GM12878 (cell line): ENCODE measurements at regions of chr3 and their contacts with region 1.

Region 1: DNA sequence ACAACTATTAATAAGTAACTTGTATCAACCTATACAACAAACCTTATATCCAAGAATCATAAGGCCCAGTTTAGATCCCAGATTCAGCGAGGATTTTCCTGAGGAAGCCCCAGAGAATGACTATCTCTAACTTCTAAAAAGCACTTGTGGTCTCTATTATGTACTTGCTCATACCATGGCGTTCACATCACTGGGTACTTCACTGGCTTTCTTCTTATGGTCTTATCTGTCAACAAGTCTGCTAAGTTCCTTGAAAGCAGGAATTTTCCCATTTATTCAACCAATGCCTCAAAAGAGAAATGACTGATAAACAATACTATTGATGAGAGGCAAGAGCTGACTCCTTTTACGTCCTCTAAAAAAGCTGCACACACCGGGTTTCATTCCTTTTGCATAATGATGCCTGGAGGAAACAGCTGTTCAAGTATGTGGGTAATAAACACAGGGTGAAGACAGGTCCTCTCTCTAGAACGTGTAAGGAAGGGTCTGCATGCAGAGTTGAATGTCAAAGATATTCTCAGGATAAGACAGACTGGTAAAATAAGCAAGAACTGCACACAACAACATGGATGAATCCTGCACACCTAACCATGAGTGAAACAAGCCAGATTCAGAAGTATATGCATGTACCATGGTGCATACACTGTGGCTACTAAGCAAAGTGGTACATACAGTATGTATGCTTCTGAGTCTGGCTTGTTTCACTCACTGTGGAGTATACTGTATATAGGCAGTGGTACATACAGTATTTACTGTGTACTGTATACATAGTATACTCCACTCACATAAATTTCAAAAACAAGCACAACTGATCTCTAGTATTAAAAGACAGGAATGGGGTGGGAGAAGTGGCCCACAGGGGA is 408.7 kb downstream of the SHQ1 start:
- DNase-seq: no peak
- ATAC-seq: peak; percentile 49
- H3K4me3 ChIP-seq: no peak overlapping the region
- H3K27ac ChIP-seq: no peak overlapping the region
- H3K4me1 ChIP-seq: peaks cover 26% of the 10 kb centered on the region
- H3K27me3 ChIP-seq: no peaks in the 10 kb centered on the region
- CTCF ChIP-seq: no peak
- EP300 ChIP-seq: no peak
- POLR2A ChIP-seq: no peak
- RAD21 ChIP-seq: no peak

Region 2: DNA sequence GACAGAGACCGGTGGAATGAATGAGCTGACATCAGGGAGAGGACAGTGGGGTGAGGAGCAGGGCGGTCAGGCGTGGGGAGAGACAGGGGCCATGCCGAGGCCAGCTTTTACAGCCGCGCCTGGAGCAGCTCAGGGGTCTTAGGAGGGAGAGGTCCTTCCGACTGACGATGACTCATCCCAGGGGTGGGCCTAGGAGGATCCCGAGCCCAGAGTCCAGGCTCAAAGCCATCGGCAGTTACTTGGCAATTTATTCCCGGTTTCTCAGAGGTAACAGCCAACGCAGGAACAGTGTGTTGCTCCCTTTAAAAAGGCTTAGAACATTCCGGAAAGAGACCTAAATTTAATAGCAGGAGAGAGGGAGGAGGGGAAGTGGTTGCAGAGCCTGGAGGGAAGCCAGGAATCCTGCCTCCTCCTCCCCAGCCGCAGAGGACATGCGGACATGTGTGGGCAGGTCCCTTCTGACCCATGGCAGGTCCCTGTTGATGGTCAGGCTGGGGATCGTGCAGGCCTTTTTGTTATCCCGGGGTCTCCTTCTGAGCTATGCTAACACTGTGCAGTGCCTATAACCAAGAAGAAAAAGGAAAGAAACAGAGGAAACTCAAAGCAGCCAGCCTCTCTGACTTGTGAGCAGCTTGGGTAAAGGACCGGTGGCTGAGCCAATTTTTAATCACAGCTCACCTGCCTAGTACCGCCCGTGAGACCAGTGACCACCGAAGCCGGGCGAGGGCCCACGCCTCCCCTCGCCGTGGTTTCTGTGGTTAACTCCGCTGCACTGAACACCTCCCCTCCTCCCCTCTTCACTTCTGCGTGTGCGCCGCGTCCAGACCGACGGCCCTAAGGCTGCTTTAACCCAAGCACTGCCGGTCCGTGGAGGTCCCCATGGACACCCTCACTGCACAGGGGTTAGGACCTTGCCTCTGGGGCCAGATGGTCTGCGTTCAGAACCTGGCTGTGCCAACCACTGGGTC is 262.2 kb before region 1 on chr3:
- CTCF ChIA-PET with region 1: no interaction called
- POLR2A ChIA-PET with region 1: no interaction called
- RAD21 ChIA-PET with region 1: no interaction called
- SMC1A ChIA-PET with region 1: interaction called, 3 read pairs
- in situ Hi-C with region 1: no loop called
- intact Hi-C with region 1: loop called (anchors 5 kb)
- DNase-seq: no peak
- ATAC-seq: peak; percentile 64
- H3K4me3 ChIP-seq: peak overlapping the region; percentile 39
- H3K27ac ChIP-seq: peak overlapping the region; percentile 85
- H3K4me1 ChIP-seq: peaks cover 29% of the 10 kb centered on the region
- H3K27me3 ChIP-seq: no peaks in the 10 kb centered on the region
- CTCF ChIP-seq: no peak
- EP300 ChIP-seq: peak; percentile 21 to 40; a peak in 2 of 4 replicates
- POLR2A ChIP-seq: no peak
- RAD21 ChIP-seq: no peak

Region 3: GRCh38 chr3:72426618-72427397 is 12.7 kb before region 1 on chr3:
- CTCF ChIA-PET with region 1: interaction called, 5 read pairs
- POLR2A ChIA-PET with region 1: interaction called, 4 read pairs
- RAD21 ChIA-PET with region 1: interaction called, 10 read pairs
- SMC1A ChIA-PET with region 1: interaction called, 41 read pairs
- in situ Hi-C with region 1: no loop called
- intact Hi-C with region 1: no loop called
- DNase-seq: no peak
- ATAC-seq: peak; percentile 76
- H3K4me3 ChIP-seq: 0 out of 2 replicates have a peak overlapping the region, but pooled peaks have one; percentile 27
- H3K27ac ChIP-seq: peak overlapping the region; percentile 37; the same call in 1 of the 2 replicates
- H3K4me1 ChIP-seq: peaks cover 28% of the 10 kb centered on the region
- H3K27me3 ChIP-seq: no peaks in the 10 kb centered on the region
- CTCF ChIP-seq: no peak
- EP300 ChIP-seq: no peak
- POLR2A ChIP-seq: no peak
- RAD21 ChIP-seq: no peak

Region 4: DNA sequence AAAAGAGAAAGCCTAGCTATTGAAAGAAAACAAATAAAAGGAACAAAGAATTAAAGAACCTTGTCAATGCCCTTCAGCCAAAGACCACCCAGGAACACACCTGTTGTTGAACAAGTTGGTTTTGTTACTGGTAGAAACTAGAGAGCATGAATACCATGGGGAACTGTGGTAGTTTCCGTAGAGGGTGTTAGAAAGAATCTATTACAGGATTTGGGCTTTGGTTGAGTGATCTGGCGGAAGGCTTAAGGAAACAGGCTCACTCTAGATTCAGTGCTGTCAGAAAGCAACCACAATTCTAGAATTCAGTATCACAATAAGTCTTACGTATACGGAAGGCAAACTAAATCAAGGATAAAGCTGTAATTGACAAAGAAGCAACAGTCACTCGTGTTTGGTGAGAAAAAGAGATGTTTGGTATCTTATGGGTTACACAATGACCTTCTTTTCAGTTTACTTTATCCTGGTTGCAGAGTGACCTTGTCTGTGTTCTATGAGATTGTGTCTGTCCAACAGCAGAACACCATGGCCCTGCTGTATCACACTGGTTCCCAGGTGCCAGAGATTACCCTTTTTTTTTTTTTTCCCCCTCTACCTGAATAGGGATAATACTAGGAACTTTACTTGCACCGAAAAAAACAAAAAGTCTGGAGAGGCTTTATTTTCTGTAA is 142.8 kb after region 1 on chr3:
- CTCF ChIA-PET with region 1: no interaction called
- POLR2A ChIA-PET with region 1: no interaction called
- RAD21 ChIA-PET with region 1: no interaction called
- SMC1A ChIA-PET with region 1: interaction called, 3 read pairs
- in situ Hi-C with region 1: no loop called
- intact Hi-C with region 1: loop called (anchors 5 kb)
- DNase-seq: peak; percentile 76
- ATAC-seq: peak; percentile 98
- H3K4me3 ChIP-seq: no peak overlapping the region
- H3K27ac ChIP-seq: no peak overlapping the region
- H3K4me1 ChIP-seq: peaks cover 7% of the 10 kb centered on the region
- H3K27me3 ChIP-seq: no peaks in the 10 kb centered on the region
- CTCF ChIP-seq: no peak
- EP300 ChIP-seq: peak; percentile 66 to 76; a peak in 3 of 4 replicates
- POLR2A ChIP-seq: no peak
- RAD21 ChIP-seq: 0 out of 2 replicates have a peak, but pooled peaks have one; percentile 6

Region 5: DNA sequence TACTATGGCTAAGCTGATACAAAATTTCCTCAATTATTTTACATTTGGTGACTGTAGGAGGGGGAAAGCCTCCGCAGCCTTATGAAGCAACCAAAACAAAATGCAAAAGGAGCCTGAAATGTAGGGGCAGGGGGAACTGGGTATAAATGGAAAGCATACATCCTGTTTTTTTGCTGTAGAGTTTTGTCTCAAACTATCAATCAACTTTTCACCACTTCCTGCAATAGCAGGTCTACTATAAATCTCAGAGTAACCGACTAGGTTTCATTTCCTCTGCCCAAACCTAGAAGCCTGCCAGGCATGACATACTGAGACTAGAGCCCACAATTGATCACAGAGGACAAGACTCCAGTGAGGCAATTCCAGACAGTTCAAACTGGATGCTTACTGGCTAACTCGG is 317.3 kb after region 1 on chr3:
- CTCF ChIA-PET with region 1: interaction called, 3 read pairs
- POLR2A ChIA-PET with region 1: no interaction called
- RAD21 ChIA-PET with region 1: no interaction called
- SMC1A ChIA-PET with region 1: no interaction called
- in situ Hi-C with region 1: no loop called
- intact Hi-C with region 1: loop called (anchors 10 kb)
- DNase-seq: peak; percentile 77
- ATAC-seq: peak; percentile 100
- H3K4me3 ChIP-seq: no peak overlapping the region
- H3K27ac ChIP-seq: peak overlapping the region; percentile 29; the same call in 1 of the 2 replicates
- H3K4me1 ChIP-seq: peaks cover 14% of the 10 kb centered on the region
- H3K27me3 ChIP-seq: no peaks in the 10 kb centered on the region
- CTCF ChIP-seq: no peak
- EP300 ChIP-seq: peak; percentile 67 to 81
- POLR2A ChIP-seq: no peak
- RAD21 ChIP-seq: no peak